PC-9 (cell line): ENCODE measurements at regions of chr3 and their contacts with region 1.

Region 1: GRCh38 chr3:132343018-132343612 is 25.9 kb downstream of the ACP3 start:
- DNase-seq: peak; percentile 25 to 51
- H3K4me3 ChIP-seq: no peak overlapping the region
- H3K27ac ChIP-seq: no peak overlapping the region
- H3K4me1 ChIP-seq: peaks cover 44% of the 10 kb centered on the region
- H3K27me3 ChIP-seq: no peaks in the 10 kb centered on the region
- CTCF ChIP-seq: peak; percentile 86

Region 2: DNA sequence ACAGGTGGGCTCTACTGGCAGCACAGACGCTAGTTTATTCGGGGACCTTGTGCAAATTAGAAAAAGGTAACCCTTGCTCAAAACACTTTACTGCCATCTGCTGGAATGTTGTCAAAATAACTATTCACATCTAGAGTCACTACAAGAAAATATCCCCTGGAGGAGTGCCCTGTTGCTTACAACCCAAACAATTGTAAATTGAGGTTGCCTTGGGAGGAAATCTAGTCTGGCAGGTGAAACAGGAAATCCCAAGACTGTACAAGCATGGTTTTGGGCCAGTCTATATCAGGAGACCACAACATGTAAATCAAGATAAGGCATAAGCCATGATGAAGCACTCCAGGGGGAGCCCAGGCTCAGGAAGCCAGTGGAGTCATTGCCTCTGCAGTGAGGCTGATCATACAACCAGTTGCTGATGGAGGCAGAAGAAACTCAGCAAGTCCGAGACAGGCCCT is 162.8 kb before region 1 on chr3:
- CTCF ChIA-PET with region 1: no interaction called
- POLR2A ChIA-PET with region 1: no interaction called
- intact Hi-C with region 1: loop called (anchors 5 kb)
- DNase-seq: peak; percentile 45 to 84
- H3K4me3 ChIP-seq: no peak overlapping the region
- H3K27ac ChIP-seq: no peak overlapping the region; the same call in 1 of the 2 replicates
- H3K4me1 ChIP-seq: peaks cover 10% of the 10 kb centered on the region; the same call in 1 of the 2 replicates
- H3K27me3 ChIP-seq: no peaks in the 10 kb centered on the region
- CTCF ChIP-seq: peak; percentile 80

Region 3: GRCh38 chr3:132265028-132265427 is 78.1 kb before region 1 on chr3:
- CTCF ChIA-PET with region 1: interaction called, 3 read pairs
- POLR2A ChIA-PET with region 1: no interaction called
- intact Hi-C with region 1: loop called (anchors 2 kb)
- DNase-seq: peak; percentile 12 to 54
- H3K4me3 ChIP-seq: no peak overlapping the region
- H3K27ac ChIP-seq: peak overlapping the region; percentile 61
- H3K4me1 ChIP-seq: peaks cover 35% of the 10 kb centered on the region
- H3K27me3 ChIP-seq: no peaks in the 10 kb centered on the region
- CTCF ChIP-seq: no peak

Region 4: GRCh38 chr3:132317229-132317948 is 25.7 kb before region 1 on chr3 and contains the start of gene ACP3:
- CTCF ChIA-PET with region 1: interaction called, 8 read pairs
- POLR2A ChIA-PET with region 1: interaction called, 4 read pairs
- intact Hi-C with region 1: loop called (anchors 1 kb)
- DNase-seq: peak; percentile 69 to 95
- H3K4me3 ChIP-seq: peak within 1 kb of the TSS; percentile 37; the same call in 1 of the 2 replicates
- H3K27ac ChIP-seq: peak within 1 kb of the TSS; percentile 94
- H3K4me1 ChIP-seq: peaks cover 35% of the 10 kb centered on the region
- H3K27me3 ChIP-seq: no peaks in the 10 kb centered on the region
- CTCF ChIP-seq: no peak
- total RNA-seq, gene ACP3: 1.5 and 3.5 TPM in 2 replicates

Region 5: GRCh38 chr3:132416807-132417694 is 73.9 kb after region 1 on chr3 and contains the start of gene DNAJC13:
- CTCF ChIA-PET with region 1: no interaction called
- POLR2A ChIA-PET with region 1: no interaction called
- intact Hi-C with region 1: loop called (anchors 5 kb)
- DNase-seq: peak; percentile 83 to 90
- H3K4me3 ChIP-seq: peak within 1 kb of the TSS; percentile 89
- H3K27ac ChIP-seq: peak within 1 kb of the TSS; percentile 81
- H3K4me1 ChIP-seq: peaks cover 22% of the 10 kb centered on the region
- H3K27me3 ChIP-seq: no peaks in the 10 kb centered on the region
- CTCF ChIP-seq: no peak
- total RNA-seq, gene DNAJC13: 44.6 and 56.6 TPM in 2 replicates

Region 6: DNA sequence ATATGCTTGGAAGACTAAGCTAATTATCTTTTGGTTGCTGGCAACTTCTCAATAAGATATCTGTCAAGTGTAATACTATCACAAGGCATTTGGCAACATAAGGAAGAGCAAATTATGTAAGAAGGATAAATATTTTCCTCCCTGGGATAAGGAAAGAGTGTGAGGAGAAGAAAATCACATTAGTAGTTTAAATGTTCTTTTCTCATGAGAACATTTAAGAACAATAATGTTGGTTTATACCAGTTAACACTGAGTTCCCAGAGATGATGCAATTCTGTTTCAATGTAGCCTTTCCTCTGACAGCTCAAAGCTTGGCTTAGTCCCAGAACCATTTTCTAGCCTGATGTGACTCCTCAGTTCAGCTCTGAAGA is 445.2 kb after region 1 on chr3:
- CTCF ChIA-PET with region 1: no interaction called
- POLR2A ChIA-PET with region 1: no interaction called
- intact Hi-C with region 1: no loop called
- DNase-seq: no peak
- H3K4me3 ChIP-seq: no peak overlapping the region
- H3K27ac ChIP-seq: no peak overlapping the region
- H3K4me1 ChIP-seq: no peaks in the 10 kb centered on the region
- H3K27me3 ChIP-seq: peaks cover 12% of the 10 kb centered on the region
- CTCF ChIP-seq: no peak